Uterus (tissue), 4 donors: ENCODE measurements at regions of chr19 and their contacts with region 1.

Region 1: DNA sequence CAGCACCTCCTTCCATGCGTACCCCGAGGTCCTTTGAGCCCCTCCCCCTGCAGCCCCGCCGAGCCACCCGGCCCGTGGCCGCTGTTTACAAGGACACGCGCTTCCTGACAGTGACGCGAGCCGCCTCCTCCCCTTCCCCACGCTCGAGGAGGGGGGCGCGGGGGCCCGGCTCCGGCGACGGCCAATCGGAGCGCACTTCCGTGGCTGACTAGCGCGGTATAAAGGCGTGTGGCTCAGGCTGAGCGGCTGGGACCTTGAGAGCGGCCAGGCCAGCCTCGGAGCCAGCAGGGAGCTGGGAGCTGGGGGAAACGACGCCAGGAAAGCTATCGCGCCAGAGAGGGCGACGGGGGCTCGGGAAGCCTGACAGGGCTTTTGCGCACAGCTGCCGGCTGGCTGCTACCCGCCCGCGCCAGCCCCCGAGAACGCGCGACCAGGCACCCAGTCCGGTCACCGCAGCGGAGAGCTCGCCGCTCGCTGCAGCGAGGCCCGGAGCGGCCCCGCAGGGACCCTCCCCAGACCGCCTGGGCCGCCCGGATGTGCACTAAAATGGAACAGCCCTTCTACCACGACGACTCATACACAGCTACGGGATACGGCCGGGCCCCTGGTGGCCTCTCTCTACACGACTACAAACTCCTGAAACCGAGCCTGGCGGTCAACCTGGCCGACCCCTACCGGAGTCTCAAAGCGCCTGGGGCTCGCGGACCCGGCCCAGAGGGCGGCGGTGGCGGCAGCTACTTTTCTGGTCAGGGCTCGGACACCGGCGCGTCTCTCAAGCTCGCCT is at the start of gene JUNB:
- DNase-seq: peak; percentile 97
- H3K4me3 ChIP-seq: peak within 1 kb of the TSS; percentile 84 to 87
- H3K27ac ChIP-seq: peak within 1 kb of the TSS; percentile 98 to 100
- H3K4me1 ChIP-seq: peaks cover 0 to 10% of the 10 kb centered on the region in 2 donors
- H3K27me3 ChIP-seq: no peaks in the 10 kb centered on the region
- CTCF ChIP-seq: peak in 1 of 4 experiments; percentile 19
- POLR2A ChIP-seq: peak; percentile 100
- total RNA-seq, gene JUNB: 47.4 to 417 (median 81.5) TPM

Region 2: GRCh38 chr19:12749938-12750521 is 41.4 kb before region 1 on chr19:
- intact Hi-C with region 1: no loop called
- DNase-seq: no peak
- H3K4me3 ChIP-seq: no peak overlapping the region
- H3K27ac ChIP-seq: no peak overlapping the region
- H3K4me1 ChIP-seq: no peaks in the 10 kb centered on the region
- H3K27me3 ChIP-seq: no peaks in the 10 kb centered on the region
- CTCF ChIP-seq: no peak
- POLR2A ChIP-seq: no peak

Region 3: DNA sequence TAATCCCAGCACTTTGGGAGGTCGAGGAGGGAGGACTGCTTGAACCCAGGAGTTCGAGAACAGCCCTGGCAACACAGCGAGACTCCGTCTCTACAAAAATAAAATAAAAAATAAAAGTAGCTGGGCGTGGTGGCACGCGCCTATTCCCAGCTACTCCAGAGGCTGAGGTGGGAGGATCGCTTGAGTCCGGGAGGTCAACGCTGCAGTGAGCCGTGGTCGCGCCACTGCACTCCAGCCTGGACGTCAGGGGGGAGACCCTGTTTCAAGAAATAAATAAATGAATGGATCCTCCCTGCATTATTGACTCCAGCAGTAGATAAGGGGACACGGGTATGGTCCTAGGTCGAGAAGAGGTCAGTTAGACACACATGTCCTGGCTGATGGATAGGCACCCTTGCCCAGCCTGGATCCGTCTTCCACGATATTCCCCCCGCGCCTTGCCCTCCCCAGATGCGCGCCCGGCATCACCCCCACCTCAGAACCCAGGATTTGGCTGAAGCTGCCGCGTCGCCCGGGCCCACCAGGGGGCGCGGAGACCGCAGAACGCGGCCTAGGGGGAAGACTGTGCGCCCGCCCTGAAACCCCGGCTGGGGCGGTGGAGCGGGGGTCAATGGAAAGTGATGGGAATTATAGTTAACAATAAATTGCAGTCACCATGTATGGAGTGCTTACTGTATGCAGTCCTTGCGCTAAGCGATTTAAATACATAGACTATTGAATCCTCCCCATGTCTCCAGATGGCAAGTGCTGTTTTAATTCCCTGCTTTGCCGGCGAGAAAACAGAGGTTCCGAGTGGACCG is 14.0 kb before region 1 on chr19:
- intact Hi-C with region 1: loop called (anchors 2 kb)
- DNase-seq: peak; percentile 75 to 83
- H3K4me3 ChIP-seq: peak overlapping the region; percentile 43 to 48
- H3K27ac ChIP-seq: peak overlapping the region; percentile 88 to 89
- H3K4me1 ChIP-seq: peaks cover 0 to 11% of the 10 kb centered on the region in 2 donors
- H3K27me3 ChIP-seq: no peaks in the 10 kb centered on the region
- CTCF ChIP-seq: peak; percentile 96 to 98 (median 97)
- POLR2A ChIP-seq: peak in 1 of 2 donors; percentile 38